ENCODE measurements at regions of chr5 and their contacts with region 1.

Region 1: GRCh38 chr5:39570403-39571027 is 145.7 kb upstream of the DAB2 start:
- DNase-seq: no peak
- H3K4me3 ChIP-seq: no peak overlapping the region
- H3K27ac ChIP-seq: no peak overlapping the region
- H3K4me1 ChIP-seq: no peaks in the 10 kb centered on the region
- H3K27me3 ChIP-seq: no peaks in the 10 kb centered on the region
- CTCF ChIP-seq: peak; percentile 38 to 72 (median 65)

Region 2: DNA sequence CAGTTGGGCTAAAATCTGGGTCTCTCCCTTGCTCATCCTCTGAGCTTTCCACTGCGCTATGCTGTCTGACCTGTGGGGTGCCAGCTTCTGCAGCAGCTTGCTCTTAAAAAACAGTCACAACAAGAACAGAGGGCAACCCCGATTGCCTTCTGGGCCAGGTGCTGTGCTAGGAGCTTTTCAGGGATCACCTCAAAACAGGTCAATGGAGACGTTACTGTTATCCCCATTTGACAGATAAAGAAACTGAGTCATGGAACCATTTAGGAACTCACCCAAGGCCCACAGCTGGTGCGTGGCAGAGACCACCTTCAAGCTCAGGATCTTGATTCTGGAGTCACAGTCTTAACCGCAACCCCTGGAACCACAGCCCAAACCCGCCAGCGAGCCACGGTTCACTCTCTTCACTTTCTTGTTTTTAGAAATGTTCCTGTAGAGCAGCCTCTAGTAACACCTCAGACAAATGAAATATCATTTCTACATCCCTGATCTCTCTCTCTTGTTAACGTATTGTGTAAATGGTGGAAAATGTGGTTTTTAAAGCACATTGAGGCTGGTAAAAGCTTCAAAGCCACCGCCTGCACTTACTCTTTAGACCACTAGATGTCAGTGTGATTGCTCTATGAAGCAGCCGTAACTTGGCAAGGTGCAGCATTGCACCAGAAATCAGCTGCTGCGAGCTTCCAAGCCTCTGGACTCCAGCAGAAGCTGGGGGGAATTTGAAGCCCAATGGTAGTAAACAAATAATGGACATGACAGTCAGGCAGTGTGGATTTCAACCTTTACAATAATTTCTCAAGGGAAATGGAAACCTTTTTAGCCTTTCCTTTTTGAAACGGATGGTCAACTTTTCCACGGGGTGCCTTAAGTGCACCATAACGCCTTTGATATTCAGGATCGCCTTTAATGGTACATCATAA is 352.9 kb before region 1 on chr5:
- intact Hi-C with region 1: loop called (anchors 2 kb)
- DNase-seq: peak in 1 of 2 donors; percentile 88
- H3K4me3 ChIP-seq: peak overlapping the region in 1 of 2 donors; percentile 5
- H3K27ac ChIP-seq: no peak overlapping the region
- H3K4me1 ChIP-seq: no peaks in the 10 kb centered on the region
- H3K27me3 ChIP-seq: no peaks in the 10 kb centered on the region
- CTCF ChIP-seq: peak; percentile 85 to 96 (median 95)

Region 3: DNA sequence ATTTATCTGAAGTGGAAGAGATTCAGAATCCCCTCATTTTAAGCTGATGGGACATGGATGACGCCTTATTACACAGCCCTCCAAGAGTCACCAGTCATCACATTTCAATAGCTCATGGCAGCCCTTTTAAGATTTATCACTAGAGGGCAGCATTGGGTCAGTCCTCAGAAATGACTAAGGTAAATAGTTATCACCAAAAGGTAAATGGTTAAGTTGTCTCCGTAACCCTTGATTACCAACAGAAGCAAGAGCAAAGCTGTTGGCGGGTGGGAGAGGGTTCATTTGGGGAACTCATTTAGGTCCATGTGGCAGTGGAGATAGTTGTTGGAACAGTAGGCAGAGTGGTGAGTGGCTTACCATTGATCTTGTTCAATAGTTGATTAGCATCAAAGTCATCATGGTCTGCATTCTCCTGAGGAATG is 194.2 kb before region 1 on chr5:
- intact Hi-C with region 1: loop called (anchors 1 kb)
- DNase-seq: no peak
- H3K4me3 ChIP-seq: no peak overlapping the region
- H3K27ac ChIP-seq: no peak overlapping the region
- H3K4me1 ChIP-seq: no peaks in the 10 kb centered on the region
- H3K27me3 ChIP-seq: no peaks in the 10 kb centered on the region
- CTCF ChIP-seq: peak; percentile 37 to 83 (median 72)

Region 4: DNA sequence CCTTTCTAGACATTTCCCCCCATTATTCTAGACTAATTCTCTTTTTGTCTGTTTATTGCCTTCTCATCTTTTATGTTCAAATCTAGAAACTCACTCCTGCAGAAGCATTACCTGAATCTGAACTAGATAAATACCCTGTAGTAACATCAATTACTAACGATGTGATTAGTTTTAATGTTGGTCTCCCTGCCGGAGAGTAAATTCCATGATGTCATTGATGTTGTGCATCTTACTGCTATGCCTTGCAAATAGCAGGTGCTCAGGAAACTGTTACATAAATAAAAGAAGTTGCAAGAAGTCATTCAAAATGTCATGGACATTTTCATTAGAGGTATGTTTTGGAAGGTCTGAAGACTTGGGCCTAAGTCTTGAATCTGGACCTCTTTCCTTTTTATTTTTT is 183.2 kb before region 1 on chr5:
- intact Hi-C with region 1: no loop called
- DNase-seq: no peak
- H3K4me3 ChIP-seq: no peak overlapping the region
- H3K27ac ChIP-seq: no peak overlapping the region
- H3K4me1 ChIP-seq: no peaks in the 10 kb centered on the region
- H3K27me3 ChIP-seq: no peaks in the 10 kb centered on the region
- CTCF ChIP-seq: no peak

Region 5: GRCh38 chr5:39608024-39608423 is 37.5 kb after region 1 on chr5:
- intact Hi-C with region 1: no loop called
- DNase-seq: no peak
- H3K4me3 ChIP-seq: no peak overlapping the region
- H3K27ac ChIP-seq: no peak overlapping the region
- H3K4me1 ChIP-seq: no peaks in the 10 kb centered on the region
- H3K27me3 ChIP-seq: no peaks in the 10 kb centered on the region
- CTCF ChIP-seq: no peak

Measured in ascending aorta (tissue), 2 donors.